ENCODE measurements at regions of chrX and their contacts with region 1.

Region 1: GRCh38 chrX:118577041-118577440 is 81.4 kb downstream of the DOCK11 start:
- DNase-seq: no peak
- H3K4me3 ChIP-seq: no peak overlapping the region
- H3K27ac ChIP-seq: no peak overlapping the region
- H3K4me1 ChIP-seq: no peaks in the 10 kb centered on the region
- H3K27me3 ChIP-seq: no peaks in the 10 kb centered on the region

Region 2: DNA sequence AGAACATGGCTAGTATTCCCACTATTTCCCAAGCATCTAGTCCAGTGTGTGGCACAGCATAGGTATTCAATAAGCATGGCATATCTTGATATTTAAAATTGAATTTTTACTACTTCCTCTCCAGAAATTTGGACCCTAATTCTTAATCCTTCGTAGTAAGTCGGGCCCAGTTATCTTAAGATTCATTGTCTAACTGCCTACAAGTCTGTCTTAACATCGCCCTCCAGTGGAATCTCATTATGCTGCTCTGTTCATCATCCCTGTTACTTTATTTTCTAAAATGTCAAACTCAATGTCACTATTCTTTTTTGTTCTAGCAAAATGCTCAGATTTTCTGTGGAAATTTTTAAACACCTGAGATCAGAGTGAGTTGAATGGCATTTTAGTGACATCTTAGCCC is 1066.6 kb before region 1 on chrX:
- in situ Hi-C with region 1: no loop called
- DNase-seq: no peak
- H3K4me3 ChIP-seq: no peak overlapping the region
- H3K27ac ChIP-seq: no peak overlapping the region
- H3K4me1 ChIP-seq: no peaks in the 10 kb centered on the region
- H3K27me3 ChIP-seq: no peaks in the 10 kb centered on the region

Region 3: DNA sequence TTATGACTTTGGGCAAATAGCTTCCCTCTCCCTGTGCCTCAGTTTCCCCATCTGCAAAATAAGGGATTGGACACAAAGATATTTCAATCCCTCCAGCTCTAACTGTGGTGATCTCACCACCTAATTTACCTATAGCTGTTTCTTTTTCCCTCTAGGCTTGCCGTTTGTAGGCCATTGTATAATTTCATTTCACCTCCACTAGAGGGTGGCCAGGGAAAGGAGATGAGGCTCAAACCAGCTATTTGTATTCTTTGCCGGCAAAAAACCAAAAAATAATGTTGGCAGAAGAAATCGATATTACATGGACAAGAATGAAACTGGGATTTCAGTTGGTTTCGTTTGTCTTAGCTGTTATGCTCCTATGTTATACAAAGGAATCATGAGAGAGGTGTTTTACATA is 117.5 kb before region 1 on chrX:
- in situ Hi-C with region 1: loop called (anchors 25 kb)
- DNase-seq: peak; percentile 65
- H3K4me3 ChIP-seq: no peak overlapping the region
- H3K27ac ChIP-seq: no peak overlapping the region
- H3K4me1 ChIP-seq: no peaks in the 10 kb centered on the region
- H3K27me3 ChIP-seq: no peaks in the 10 kb centered on the region

Measured in GM23248 (cell line).